ENCODE measurements at regions of chr7 and their contacts with region 1.

Region 1: DNA sequence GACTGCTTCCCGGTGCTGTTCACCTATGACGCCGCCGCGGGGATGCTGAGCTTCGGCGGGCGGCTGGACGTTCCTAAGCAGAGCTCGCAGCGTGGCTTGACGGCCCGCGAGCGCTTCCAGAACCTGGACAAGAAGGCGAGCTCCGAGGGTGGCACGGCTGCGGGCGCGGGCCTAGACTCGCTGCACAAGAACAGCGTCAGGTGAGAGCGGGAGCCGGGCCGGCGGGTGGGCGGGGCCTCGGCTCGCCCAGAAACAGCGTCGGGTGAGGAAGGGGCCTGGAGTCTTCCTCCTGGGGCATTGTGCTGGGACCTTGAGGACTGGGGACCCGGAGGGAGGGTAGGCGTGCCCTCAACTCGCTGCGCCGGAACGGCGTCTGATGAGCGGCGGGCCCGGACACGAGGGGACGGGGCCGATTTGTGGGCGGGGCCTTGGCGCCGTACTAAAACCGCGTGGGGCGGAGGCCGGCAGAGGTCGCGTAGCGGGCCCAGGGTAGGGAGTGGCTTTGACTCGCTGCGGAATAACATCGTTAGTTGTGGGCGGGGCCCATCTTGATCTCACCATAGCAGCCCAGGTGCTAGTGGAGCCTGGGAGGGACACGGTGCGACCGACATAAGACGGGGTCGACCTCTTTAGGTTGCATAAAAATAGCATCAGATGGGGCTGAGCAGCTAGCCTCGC is 15.6 kb downstream of the PDAP1 start:
- DNase-seq: peak; percentile 68 to 93 (median 84)
- ATAC-seq: peak; percentile 95 to 96
- H3K4me3 Mint-ChIP-seq: peak overlapping the region; percentile 77 to 93 (median 85)
- H3K27ac Mint-ChIP-seq: peak overlapping the region; percentile 80 to 97 (median 94)
- H3K4me1 Mint-ChIP-seq: peaks cover 1 to 26% (median 23%) of the 10 kb centered on the region in 4 donors
- H3K27me3 Mint-ChIP-seq: no peaks in the 10 kb centered on the region

Region 2: GRCh38 chr7:99380032-99380822 is 12.6 kb before region 1 on chr7:
- POLR2A ChIA-PET with region 1: interaction called, 95 read pairs
- DNase-seq: peak in 7 of 10 donors; percentile 25 to 49 (median 33)
- ATAC-seq: peak; percentile 7 to 8
- H3K4me3 Mint-ChIP-seq: peak overlapping the region; percentile 76 to 90 (median 86)
- H3K27ac Mint-ChIP-seq: peak overlapping the region; percentile 87 to 99 (median 98)
- H3K4me1 Mint-ChIP-seq: peaks cover 28 to 79% (median 72%) of the 10 kb centered on the region in 4 donors
- H3K27me3 Mint-ChIP-seq: no peaks in the 10 kb centered on the region

Region 3: DNA sequence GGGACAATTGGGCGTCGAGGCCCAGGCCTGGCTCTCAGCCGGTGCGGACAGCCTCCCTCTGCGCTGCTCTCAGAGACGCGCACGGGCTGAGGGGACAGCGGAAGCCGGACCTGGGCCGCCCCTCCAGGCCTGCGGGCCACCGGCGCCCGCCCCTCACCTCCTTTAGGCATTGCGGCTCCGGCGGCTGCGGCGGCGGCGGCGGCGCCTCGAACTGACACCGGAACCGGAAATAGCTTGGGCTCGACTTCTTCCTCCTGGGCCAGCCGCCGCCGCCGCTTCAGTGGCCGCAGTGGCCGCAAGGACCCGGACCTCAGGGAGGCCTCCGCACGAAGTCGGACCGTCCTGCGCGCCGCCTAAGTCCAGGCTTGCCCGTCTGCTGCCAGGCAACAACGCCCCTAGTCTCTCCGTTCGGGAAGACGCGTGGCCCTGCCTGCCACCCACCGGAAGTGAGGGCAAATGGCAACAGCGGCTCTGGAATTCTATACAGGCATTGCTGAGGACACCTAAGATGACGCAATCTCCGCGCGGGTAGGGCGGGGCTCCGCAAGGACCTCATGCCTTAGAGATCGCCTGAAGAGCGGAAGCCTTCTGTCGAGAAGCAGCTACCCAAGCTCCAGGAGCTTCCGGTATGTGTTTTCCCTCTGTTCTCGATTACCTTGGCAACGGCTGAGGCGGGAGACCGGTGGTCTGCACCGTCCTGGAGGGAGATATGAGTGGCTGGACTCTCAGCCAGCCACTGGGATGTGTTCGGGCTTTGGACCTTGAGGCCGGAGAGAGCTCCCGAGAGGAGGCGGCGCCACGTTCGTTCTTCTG is 15.8 kb after region 1 on chr7 and contains the starts of genes BUD31 and PDAP1:
- POLR2A ChIA-PET with region 1: interaction called, 73 read pairs
- DNase-seq: peak; percentile 79 to 100 (median 96)
- ATAC-seq: peak; percentile 82 to 84
- H3K4me3 Mint-ChIP-seq: peak within 1 kb of the TSS; percentile 91 to 100 (median 96)
- H3K27ac Mint-ChIP-seq: peak within 1 kb of the TSS; percentile 94 to 99 (median 98)
- H3K4me1 Mint-ChIP-seq: peaks cover 33 to 74% (median 55%) of the 10 kb centered on the region in 4 donors
- H3K27me3 Mint-ChIP-seq: no peaks in the 10 kb centered on the region
- polyA plus RNA-seq, gene BUD31: 151 to 216 (median 170) TPM
- polyA plus RNA-seq, gene PDAP1: 24.0 to 35.6 (median 33.4) TPM

Region 4: DNA sequence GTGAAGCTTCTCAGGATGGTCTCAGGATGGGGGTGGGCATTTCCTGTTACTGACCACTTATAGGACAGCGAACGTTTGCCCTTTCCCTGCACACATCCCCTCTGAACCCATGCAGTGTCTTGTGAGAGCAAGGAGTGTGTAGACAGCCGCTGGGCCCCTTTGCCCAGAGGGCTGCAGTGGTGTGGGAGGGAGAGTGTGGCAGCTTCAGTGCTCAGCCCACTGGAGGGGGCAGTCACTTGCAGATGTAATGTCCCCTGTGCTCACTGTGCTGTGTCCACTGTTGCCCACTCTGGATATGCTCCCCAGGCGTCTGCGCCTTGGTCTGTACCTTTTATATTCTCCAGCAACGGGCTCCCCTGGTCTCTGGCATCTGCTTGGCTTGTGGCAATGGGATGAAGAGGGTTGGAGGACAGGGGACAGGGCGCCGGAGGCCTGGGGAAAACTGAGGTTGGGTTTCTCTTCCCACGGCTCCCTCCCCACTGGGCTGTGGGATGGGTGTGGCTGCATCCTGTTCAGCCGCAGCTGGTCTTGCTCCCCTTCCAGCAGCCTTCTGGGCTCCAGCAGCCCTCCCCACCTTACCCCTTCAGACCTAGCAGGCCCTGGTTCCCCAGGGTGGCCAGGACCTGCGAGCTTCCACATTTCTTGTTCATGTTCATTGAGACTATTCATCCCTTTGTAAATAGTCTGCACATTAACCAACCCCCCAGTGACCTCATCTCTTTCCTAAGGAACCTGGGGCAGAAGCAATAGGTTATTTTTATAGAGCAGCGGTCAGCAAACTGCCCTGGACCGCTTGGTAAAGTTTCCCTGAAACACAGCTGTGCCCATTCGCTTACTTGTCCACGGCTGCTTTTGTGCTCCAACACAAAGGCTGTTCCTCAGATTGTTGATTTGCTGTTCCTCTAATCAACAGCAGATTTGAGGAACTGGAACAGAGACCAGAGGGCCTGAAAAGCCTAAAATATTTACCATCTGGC is 85.9 kb after region 1 on chr7:
- POLR2A ChIA-PET with region 1: no interaction called
- DNase-seq: no peak
- ATAC-seq: no peak
- H3K4me3 Mint-ChIP-seq: peak overlapping the region in 6 of 10 donors; percentile 30 to 56 (median 46)
- H3K27ac Mint-ChIP-seq: peak overlapping the region; percentile 34 to 87 (median 66)
- H3K4me1 Mint-ChIP-seq: peaks cover 15 to 43% (median 35%) of the 10 kb centered on the region in 4 donors
- H3K27me3 Mint-ChIP-seq: no peaks in the 10 kb centered on the region